Esophagus muscularis mucosa (tissue), 4 donors: ENCODE measurements at regions of chr12 and their contacts with region 1.

Region 1: DNA sequence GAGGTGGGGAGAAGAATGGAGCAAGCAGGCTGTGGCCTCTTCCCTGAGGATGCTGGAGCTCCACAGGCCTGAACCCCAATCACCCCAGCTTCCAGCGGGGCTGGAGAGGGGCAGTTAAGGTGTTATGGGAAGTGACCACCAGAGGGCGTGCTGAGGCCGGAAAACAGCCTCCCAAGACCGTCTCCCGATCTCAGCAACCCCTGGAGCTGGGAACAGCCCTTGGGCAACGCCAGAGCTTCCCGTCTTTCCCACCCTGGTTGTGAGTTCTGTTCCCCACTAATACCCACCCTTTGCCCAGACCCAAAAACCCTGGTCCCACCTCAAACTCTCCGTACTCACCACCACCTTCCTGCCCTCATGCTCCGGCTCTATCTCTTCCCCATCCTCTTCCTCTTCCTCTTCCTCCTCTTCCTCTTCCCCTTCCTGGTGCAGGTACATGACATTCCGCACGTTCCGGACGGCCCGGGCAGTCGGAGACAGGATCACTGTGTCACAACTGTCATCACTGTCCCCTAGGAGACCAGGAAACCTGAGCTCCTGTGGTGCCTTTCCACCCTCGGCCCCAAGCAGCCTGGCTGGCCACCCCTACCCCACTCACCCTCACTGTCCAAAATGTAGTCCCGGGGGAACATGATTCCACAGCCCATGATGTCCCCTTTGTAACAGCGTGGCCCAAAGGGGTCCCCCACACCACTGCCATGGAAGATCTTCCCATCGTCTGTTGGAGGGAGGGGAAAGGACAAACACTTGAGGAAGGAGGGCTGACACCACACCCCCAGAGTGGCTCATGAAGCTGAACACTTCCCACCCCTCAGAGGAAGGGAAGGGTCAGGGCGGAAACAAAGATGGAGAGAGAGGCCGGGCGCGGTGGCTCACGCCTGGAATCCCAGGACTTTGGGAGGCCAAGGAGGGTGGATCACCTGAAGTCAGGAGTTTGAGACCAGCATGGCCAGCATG is 12.9 kb downstream of the SPRYD3 start:
- DNase-seq: no peak
- H3K4me3 ChIP-seq: peak overlapping the region; percentile 8 to 35 (median 20)
- H3K27ac ChIP-seq: peak overlapping the region; percentile 82 to 95 (median 88)
- H3K4me1 ChIP-seq: peaks cover 89 to 100% (median 99%) of the 10 kb centered on the region in 4 donors
- H3K27me3 ChIP-seq: no peaks in the 10 kb centered on the region
- CTCF ChIP-seq: peak; percentile 92 to 94 (median 93)
- EP300 ChIP-seq: no peak
- POLR2A ChIP-seq: no peak

Region 2: DNA sequence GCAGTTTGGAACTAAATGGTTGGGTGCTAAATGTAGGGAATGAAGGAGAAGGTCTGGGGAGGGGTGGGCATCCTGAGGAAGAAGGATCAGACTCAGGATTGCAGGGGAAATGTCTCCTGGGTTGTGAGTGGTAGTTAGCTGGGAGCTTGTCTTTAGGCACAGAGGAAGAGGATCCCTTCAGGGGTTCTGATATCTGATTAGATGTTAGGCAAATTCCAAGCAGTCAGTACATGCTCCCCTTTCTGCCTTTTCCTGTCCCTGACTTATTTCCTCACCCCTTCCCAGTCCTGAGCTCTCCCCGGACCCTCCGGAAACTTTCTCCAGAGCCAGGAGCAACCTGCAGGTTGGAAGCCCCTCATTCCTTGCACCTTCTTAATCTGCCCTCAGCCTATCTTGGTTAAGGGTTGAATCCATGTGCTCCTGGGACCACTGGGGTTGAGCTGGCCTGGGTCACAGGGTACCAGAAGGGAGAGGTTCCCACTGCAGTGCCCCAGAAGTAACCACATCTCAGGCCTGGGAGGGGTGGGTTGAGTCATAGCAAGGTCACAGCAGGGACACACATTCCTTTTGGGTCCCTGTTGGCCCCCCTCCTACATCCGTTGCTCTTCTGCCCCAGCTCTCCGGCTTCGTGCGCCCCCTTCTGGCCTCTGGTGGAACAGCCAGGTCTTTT is 32.9 kb after region 1 on chr12:
- intact Hi-C with region 1: loop called (anchors 1 kb)
- DNase-seq: peak; percentile 99
- H3K4me3 ChIP-seq: peak overlapping the region; percentile 69 to 78 (median 71)
- H3K27ac ChIP-seq: peak overlapping the region; percentile 87 to 96 (median 91)
- H3K4me1 ChIP-seq: peaks cover 32 to 68% (median 52%) of the 10 kb centered on the region in 4 donors
- H3K27me3 ChIP-seq: no peaks in the 10 kb centered on the region
- CTCF ChIP-seq: peak; percentile 97 to 100 (median 99)
- EP300 ChIP-seq: no peak
- POLR2A ChIP-seq: no peak

Region 3: GRCh38 chr12:53190108-53190729 is 124.0 kb after region 1 on chr12:
- intact Hi-C with region 1: loop called (anchors 2 kb)
- DNase-seq: no peak
- H3K4me3 ChIP-seq: no peak overlapping the region
- H3K27ac ChIP-seq: peak overlapping the region; percentile 37 to 65 (median 56)
- H3K4me1 ChIP-seq: peaks cover 0 to 17% (median 14%) of the 10 kb centered on the region in 4 donors
- H3K27me3 ChIP-seq: no peaks in the 10 kb centered on the region
- CTCF ChIP-seq: peak; percentile 77 to 87 (median 82)
- EP300 ChIP-seq: no peak
- POLR2A ChIP-seq: no peak